ENCODE measurements at regions of chr10 and their contacts with region 1.

Region 1: DNA sequence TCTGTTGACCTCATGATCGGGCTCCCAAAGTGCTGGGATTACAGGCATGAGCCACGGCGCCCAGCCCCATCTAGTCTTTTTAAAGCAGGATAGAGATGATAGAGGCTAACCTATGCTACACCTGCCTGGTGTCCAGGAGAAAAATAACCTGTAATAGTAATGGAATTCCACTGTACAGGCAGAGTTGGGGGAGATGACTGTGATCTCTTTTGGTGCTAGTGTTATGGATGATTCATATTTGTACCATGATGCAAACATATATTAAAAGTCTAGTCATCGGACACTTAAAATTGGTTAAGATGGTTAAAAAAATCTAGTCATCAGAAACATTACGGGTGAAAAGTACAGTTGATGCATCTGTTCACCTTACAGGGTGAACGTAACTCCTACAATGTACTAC is 6.1 kb upstream of the SAR1A start:
- DNase-seq: no peak
- CTCF ChIP-seq: no peak

Region 2: DNA sequence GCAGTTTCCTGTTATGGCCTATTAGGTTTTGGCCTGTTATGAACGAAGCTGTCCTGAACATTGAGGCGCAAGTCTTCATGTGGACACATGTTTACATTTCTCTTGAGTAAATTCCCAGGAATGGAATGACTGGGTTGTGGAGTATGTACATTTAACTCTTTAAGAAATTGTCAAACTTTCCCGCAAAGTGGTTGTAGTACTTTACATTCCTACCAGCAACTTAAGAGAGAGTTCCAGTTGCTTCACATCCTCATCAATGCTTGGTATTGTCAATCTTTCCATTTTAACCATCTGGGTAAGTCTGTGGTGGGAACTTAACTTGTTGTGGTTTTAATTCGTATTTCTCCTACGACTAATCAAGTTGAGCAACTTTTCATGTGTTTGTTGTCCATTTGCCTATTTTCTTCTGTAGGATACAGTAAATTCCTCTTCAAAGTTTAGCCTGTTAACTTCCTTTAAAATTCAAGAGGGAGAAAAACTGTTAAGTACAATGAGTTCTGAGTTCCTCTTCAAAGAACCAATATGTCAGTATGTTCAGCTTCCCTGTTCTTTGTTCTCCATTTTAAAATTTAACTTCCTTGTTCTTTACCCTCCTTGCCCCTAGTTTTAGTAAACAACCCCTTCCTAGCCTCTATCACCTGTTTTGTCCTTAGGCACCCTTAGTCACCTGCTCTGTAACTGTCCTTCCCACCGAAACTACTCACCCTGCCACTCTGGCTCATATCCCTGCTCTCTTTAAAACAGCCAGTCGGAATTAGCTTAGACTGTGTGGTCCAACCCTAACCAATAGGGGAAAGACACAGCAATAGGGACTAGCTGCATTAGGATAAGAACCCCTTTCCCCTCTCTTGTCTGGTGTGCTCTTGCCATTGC is 472.4 kb before region 1 on chr10:
- CTCF ChIA-PET with region 1: no interaction called
- POLR2A ChIA-PET with region 1: no interaction called
- DNase-seq: no peak
- CTCF ChIP-seq: no peak

Region 3: GRCh38 chr10:70109064-70109729 is 67.2 kb before region 1 on chr10:
- CTCF ChIA-PET with region 1: no interaction called
- POLR2A ChIA-PET with region 1: no interaction called
- DNase-seq: no peak
- CTCF ChIP-seq: no peak

Region 4: GRCh38 chr10:70197235-70197945 is 20.9 kb after region 1 on chr10:
- CTCF ChIA-PET with region 1: interaction called, 12 read pairs
- POLR2A ChIA-PET with region 1: no interaction called
- DNase-seq: no peak
- CTCF ChIP-seq: no peak